HepG2 (cell line): ENCODE measurements at regions of chr1 and their contacts with region 1.

Region 1: DNA sequence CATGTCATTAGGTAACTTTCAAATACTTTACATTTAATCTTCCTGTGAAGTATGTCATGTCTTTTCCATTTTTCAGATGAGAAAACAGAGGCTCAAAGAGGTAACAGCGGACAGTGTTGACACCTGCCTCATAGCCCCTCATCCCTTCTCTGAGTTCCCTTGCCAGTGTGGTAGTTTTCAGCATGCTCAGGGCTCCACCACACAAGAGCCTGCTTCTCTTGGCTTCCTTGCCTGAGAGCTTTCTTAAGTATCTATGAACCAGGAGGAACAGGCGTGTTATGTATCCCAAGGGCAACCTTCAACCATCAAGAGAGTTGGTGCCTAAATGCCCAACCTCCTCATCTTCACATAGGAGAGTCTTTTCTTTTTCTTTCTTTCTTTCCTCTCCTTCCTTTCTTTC is 5.9 kb upstream of the PAFAH2 start:
- DNase-seq: no peak
- ATAC-seq: no peak
- H3K4me3 ChIP-seq: no peak overlapping the region
- H3K27ac ChIP-seq: no peak overlapping the region
- H3K4me1 ChIP-seq: peaks cover 21% of the 10 kb centered on the region
- H3K27me3 ChIP-seq: peaks cover 3 to 13% of the 10 kb centered on the region in 2 experiments; a peak in 3 of 5 replicates
- CTCF ChIP-seq: no peak
- EP300 ChIP-seq: no peak
- POLR2A ChIP-seq: no peak
- RAD21 ChIP-seq: no peak

Region 2: GRCh38 chr1:26021647-26022403 is 18.1 kb after region 1 on chr1 and contains the start of gene EXTL1:
- CTCF ChIA-PET with region 1: no interaction called
- POLR2A ChIA-PET with region 1: no interaction called
- in situ Hi-C with region 1: no loop called
- intact Hi-C with region 1: loop called (anchors 1 kb)
- DNase-seq: no peak
- ATAC-seq: peak; percentile 63
- H3K4me3 ChIP-seq: peak within 1 kb of the TSS; percentile 43 to 78 (median 49)
- H3K27ac ChIP-seq: no peak within 1 kb of the TSS
- H3K4me1 ChIP-seq: peaks cover 89% of the 10 kb centered on the region
- H3K27me3 ChIP-seq: peaks cover 4 to 25% of the 10 kb centered on the region in 2 experiments
- CTCF ChIP-seq: no peak
- EP300 ChIP-seq: no peak
- POLR2A ChIP-seq: peak in 1 of 2 experiments; percentile 75; a peak in 2 of 4 replicates
- RAD21 ChIP-seq: no peak
- total RNA-seq, gene EXTL1: 0.28 and 0.35 TPM in 2 replicates

Region 3: DNA sequence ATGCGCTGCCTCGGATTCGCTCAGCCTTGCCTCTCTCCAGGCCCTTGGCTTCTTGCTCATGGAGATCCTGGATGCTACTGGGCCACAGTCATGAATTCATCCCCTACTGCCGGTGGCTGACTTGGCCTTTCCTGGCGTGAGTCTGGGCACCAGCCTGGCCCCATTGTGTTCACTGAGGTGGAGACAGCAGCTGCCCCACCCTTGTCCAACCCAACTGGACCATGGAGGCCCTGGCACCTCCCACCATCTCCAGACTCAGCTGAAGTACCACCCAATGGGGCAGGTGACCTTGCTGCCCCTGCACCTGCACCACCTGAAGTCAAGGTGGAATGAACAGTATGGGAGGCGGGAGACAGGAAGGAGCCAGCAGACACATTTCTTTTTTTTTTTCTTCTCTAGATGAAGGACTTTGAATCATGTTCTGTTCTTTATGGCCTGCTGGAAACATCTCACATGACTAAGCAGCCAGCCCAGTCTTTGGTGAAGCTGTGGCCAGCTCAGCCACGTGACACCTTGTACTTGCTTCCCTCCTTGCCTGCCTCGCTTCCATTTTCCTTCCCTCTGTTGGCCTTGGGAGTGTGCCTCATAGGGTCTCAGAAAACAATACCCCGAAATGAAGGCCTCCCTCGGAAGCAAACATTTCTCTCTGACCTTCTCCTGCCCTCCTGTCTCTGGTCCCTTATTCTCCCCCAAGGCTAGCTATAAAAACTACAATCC is 46.0 kb after region 1 on chr1:
- CTCF ChIA-PET with region 1: no interaction called
- POLR2A ChIA-PET with region 1: no interaction called
- in situ Hi-C with region 1: no loop called
- intact Hi-C with region 1: no loop called
- DNase-seq: no peak
- ATAC-seq: no peak
- H3K4me3 ChIP-seq: no peak overlapping the region
- H3K27ac ChIP-seq: no peak overlapping the region
- H3K4me1 ChIP-seq: no peaks in the 10 kb centered on the region
- H3K27me3 ChIP-seq: peaks cover 21 to 72% of the 10 kb centered on the region in 2 experiments; a peak in 4 of 5 replicates
- CTCF ChIP-seq: no peak
- EP300 ChIP-seq: no peak
- POLR2A ChIP-seq: no peak
- RAD21 ChIP-seq: no peak

Region 4: DNA sequence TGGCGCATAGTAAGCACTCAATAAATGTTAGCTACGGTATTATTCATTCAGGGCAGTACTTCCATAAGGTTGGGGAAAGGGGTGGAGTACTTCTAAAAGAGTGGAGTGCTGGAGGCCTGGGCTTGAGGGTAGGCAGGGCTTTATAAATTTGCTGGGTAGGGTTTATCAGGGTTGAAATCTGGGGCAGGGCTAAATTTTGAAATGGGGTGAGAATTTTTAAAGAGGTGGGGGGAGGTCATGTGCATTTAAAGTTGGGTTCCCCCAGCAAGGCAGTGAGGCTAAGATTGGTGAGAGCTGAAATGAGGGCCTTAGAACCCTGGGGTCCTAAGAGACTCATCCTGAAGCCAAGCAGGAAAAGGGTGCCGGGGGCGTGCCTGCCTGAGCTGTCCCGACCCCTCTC is 196.7 kb after region 1 on chr1:
- CTCF ChIA-PET with region 1: no interaction called
- POLR2A ChIA-PET with region 1: no interaction called
- in situ Hi-C with region 1: no loop called
- intact Hi-C with region 1: no loop called
- DNase-seq: no peak
- ATAC-seq: no peak
- H3K4me3 ChIP-seq: no peak overlapping the region
- H3K27ac ChIP-seq: no peak overlapping the region
- H3K4me1 ChIP-seq: no peaks in the 10 kb centered on the region
- H3K27me3 ChIP-seq: peaks cover 3 to 31% of the 10 kb centered on the region in 2 experiments; a peak in 3 of 5 replicates
- CTCF ChIP-seq: no peak
- EP300 ChIP-seq: no peak
- POLR2A ChIP-seq: no peak
- RAD21 ChIP-seq: no peak